SK-N-SH (cell line): ENCODE measurements at regions of chr9 and their contacts with region 1.

Region 1: DNA sequence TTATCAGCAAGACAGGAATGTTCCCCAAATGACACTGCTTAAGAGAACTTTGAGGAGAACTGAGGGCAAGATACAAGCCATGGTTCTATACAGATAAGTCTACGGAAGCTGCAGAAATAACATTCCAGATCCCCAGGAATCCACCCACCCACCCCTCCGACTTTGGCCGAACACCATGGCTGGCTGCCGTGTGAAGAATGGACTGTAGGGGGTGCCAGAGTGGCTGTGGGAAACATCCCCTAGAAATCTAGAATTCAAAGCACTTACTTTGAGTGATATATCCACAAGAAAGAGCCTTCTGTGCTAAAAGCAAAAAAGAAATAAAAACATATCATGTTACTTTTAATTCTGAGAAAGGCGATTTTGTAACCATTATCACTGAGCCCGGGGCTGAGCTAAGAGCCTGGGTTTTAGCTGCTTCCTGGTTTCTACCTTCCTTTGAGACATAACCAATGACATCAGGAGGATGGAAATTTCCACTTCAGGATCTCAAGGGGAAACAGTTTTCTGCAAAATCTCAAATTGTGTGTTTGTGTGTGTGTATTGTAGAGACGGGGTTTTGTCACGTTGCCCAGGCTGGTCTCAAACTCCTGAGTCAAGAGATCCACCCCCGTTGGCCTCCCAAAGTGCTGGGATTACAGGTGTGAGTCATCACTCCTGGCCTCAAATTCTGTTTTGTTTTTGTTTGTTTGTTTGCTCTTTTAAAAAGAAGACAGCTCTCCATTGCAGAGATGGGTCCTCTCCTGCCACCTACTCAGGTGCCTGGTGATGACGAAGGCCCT is 36.4 kb downstream of the GGTA1 start:
- DNase-seq: peak; percentile 62
- H3K4me3 ChIP-seq: no peak overlapping the region
- H3K27ac ChIP-seq: no peak overlapping the region
- H3K4me1 ChIP-seq: peaks cover 0 to 2% of the 10 kb centered on the region in 2 experiments; a peak in 1 of 4 replicates
- H3K27me3 ChIP-seq: no peaks in the 10 kb centered on the region
- CTCF ChIP-seq: peak; percentile 65
- EP300 ChIP-seq: no peak
- RAD21 ChIP-seq: peak; percentile 68

Region 2: DNA sequence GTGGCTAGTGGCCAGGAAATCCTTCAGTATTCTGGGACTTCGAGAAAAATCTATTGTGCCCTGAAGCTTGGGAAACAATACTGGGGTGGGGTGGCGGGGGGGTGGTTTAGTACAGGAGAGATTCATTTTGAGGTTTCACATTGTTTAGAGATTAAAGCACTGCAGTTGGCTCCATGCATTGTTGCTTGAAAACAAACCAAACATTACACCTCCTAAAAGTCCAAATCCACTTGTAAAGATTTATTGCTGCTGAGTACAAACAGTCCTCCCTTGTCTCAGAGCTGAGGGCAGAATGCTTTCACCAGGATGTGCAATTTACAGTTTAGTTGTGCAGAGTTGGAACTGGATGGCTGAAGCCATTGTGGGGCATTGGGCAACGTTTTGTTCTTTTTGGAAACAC is 13.0 kb before region 1 on chr9:
- CTCF ChIA-PET with region 1: interaction called, 10 read pairs
- POLR2A ChIA-PET with region 1: no interaction called
- DNase-seq: no peak
- H3K4me3 ChIP-seq: no peak overlapping the region
- H3K27ac ChIP-seq: no peak overlapping the region
- H3K4me1 ChIP-seq: no peaks in the 10 kb centered on the region; a peak in 2 of 4 replicates
- H3K27me3 ChIP-seq: no peaks in the 10 kb centered on the region
- CTCF ChIP-seq: no peak
- EP300 ChIP-seq: no peak
- RAD21 ChIP-seq: no peak

Region 3: DNA sequence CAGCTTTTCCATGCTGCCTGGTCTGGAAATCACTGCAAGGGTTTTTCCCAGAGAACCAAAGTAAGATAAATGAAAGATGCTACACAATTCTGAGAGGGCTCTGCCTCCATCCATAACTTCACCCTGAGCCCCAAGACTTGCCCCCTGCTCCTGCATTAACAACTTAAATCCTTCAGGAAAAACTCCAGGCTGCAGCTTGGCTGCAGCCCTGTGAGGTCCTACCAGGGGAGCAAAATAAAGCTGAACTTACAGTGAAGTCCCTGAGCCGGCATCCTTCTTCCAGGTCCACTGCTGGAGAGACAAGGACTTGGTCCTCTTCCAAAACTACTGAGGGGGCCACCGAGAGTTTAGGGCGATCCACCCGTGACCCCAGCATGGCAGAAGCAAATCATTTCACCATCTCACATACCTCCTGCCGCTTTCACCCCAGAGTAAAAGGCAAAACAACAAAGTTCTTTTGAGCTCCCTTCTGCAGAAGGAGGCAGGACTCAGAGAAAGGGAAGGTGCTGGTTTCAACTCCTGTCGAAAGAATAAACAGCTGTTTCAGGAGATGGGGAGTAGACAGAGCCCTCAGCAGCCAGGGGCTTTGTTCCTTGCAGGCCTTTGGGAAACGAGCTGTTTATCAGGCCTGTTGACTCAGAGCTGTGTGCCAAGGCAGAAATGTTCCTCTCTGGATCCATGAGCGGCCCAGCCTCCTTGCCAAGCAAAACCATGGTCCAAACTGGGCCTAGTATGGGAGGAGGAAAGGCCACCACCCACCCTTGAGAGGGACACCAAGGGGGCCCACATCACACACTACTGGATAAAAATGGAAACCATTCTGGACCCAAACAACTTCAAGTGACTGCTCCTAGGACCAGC is 15.8 kb after region 1 on chr9:
- CTCF ChIA-PET with region 1: interaction called, 15 read pairs
- POLR2A ChIA-PET with region 1: no interaction called
- DNase-seq: no peak
- H3K4me3 ChIP-seq: no peak overlapping the region
- H3K27ac ChIP-seq: no peak overlapping the region
- H3K4me1 ChIP-seq: peaks cover 0 to 11% of the 10 kb centered on the region in 2 experiments; a peak in 1 of 4 replicates
- H3K27me3 ChIP-seq: 0 out of 2 replicates have a peak, but pooled peaks cover 5% of the 10 kb centered on the region
- CTCF ChIP-seq: no peak
- EP300 ChIP-seq: no peak
- RAD21 ChIP-seq: no peak

Region 4: DNA sequence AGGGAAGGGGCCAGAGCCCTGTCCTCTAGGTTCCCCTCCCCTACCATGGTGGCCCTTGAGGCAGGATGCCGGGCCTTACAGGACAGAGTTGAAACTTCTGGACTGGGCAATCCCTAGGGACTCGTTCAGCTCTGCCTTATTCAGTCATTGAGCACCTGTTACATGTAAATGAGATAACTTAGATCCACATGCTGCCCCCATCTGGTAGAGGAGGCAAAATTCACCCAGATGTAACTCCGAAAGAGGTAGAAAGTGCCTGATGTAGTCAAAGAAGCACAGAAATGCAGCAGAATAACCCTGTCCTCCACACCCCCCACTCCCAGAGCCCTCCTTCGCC is 34.9 kb after region 1 on chr9:
- CTCF ChIA-PET with region 1: interaction called, 31 read pairs
- POLR2A ChIA-PET with region 1: no interaction called
- DNase-seq: peak; percentile 82
- H3K4me3 ChIP-seq: peak overlapping the region; percentile 52 to 70
- H3K27ac ChIP-seq: no peak overlapping the region
- H3K4me1 ChIP-seq: peaks cover 0 to 18% of the 10 kb centered on the region in 2 experiments; a peak in 2 of 4 replicates
- H3K27me3 ChIP-seq: no peaks in the 10 kb centered on the region
- CTCF ChIP-seq: peak; percentile 76
- EP300 ChIP-seq: no peak
- RAD21 ChIP-seq: peak; percentile 61

Region 5: DNA sequence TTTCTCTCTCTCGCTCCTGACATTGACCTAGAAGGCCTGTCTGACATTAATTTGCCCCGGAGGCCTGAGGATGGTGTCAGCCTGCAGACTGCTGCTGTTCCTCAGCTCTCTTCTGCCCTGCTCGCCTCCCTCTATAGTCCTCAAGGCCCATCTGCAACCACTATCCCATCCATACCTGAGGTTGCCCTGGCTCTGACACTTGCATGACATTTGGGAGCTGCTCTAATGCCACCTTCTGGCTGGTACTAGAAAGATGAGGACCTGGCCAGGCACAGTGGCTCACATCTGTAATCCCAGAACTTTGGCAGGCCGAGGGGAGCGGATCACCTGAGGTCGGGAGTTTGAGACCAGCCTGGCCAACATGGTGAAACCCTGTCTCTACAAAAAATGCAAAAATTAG is 75.0 kb after region 1 on chr9:
- CTCF ChIA-PET with region 1: interaction called, 23 read pairs
- POLR2A ChIA-PET with region 1: no interaction called
- DNase-seq: peak; percentile 56
- H3K4me3 ChIP-seq: no peak overlapping the region
- H3K27ac ChIP-seq: no peak overlapping the region
- H3K4me1 ChIP-seq: no peaks in the 10 kb centered on the region; a peak in 1 of 4 replicates
- H3K27me3 ChIP-seq: no peaks in the 10 kb centered on the region
- CTCF ChIP-seq: peak; percentile 29
- EP300 ChIP-seq: no peak
- RAD21 ChIP-seq: peak; percentile 75